B cell (primary cell): ENCODE measurements at regions of chr10 and their contacts with region 1.

Region 1: DNA sequence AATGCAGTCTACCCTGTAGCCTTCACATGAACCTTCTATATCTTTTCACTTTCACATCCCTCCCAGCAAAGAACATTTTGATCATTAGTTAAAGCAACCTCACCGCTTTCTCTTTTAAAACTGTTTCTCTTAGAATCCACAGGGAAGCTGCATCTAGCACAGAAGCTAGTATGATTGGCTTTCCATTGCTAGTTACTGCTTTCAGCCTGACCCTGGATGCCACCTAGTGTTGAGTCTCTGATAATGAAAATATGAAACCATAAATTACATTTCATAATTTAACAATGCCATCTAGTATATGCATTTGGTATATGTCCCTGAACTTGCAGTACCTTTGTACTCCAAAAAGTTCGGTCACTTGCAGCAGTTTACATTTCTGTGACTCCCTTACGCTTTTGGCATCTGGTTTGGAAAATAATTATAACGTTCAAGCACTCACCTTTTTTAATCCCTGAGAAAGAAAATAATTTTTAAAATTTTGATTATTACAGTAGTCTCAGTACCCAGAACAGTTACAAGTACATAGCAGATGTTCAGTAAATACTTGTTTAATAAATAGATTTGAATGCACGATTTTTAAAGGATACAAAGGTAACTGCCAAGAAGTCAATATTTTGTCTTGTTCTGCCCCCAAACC is 22.7 kb downstream of the CISD1 start:
- DNase-seq: peak; percentile 64
- ATAC-seq: peak; percentile 68
- H3K4me3 ChIP-seq: no peak overlapping the region
- H3K4me3 Mint-ChIP-seq: no peak overlapping the region
- H3K27ac ChIP-seq: no peak overlapping the region
- H3K27ac Mint-ChIP-seq: no peak overlapping the region
- H3K4me1 ChIP-seq: no peaks in the 10 kb centered on the region
- H3K4me1 Mint-ChIP-seq: no peaks in the 10 kb centered on the region
- H3K27me3 ChIP-seq: no peaks in the 10 kb centered on the region
- H3K27me3 Mint-ChIP-seq: no peaks in the 10 kb centered on the region
- CTCF ChIP-seq: peak; percentile 88

Region 2: GRCh38 chr10:58152673-58153263 is 138.9 kb before region 1 on chr10:
- CTCF ChIA-PET with region 1: interaction called, 18 read pairs
- POLR2A ChIA-PET with region 1: no interaction called
- intact Hi-C with region 1: no loop called
- DNase-seq: peak; percentile 22
- ATAC-seq: no peak
- H3K4me3 ChIP-seq: no peak overlapping the region
- H3K4me3 Mint-ChIP-seq: no peak overlapping the region
- H3K27ac ChIP-seq: no peak overlapping the region
- H3K27ac Mint-ChIP-seq: no peak overlapping the region
- H3K4me1 ChIP-seq: no peaks in the 10 kb centered on the region
- H3K4me1 Mint-ChIP-seq: no peaks in the 10 kb centered on the region
- H3K27me3 ChIP-seq: peaks cover 0 to 3% (median 0%) of the 10 kb centered on the region in 4 experiments
- H3K27me3 Mint-ChIP-seq: peaks cover 23% of the 10 kb centered on the region
- CTCF ChIP-seq: peak; percentile 55

Region 3: GRCh38 chr10:58184120-58184670 is 107.5 kb before region 1 on chr10:
- CTCF ChIA-PET with region 1: interaction called, 407 read pairs
- POLR2A ChIA-PET with region 1: no interaction called
- intact Hi-C with region 1: no loop called
- DNase-seq: no peak
- ATAC-seq: no peak
- H3K4me3 ChIP-seq: no peak overlapping the region
- H3K4me3 Mint-ChIP-seq: no peak overlapping the region
- H3K27ac ChIP-seq: no peak overlapping the region
- H3K27ac Mint-ChIP-seq: no peak overlapping the region
- H3K4me1 ChIP-seq: no peaks in the 10 kb centered on the region
- H3K4me1 Mint-ChIP-seq: no peaks in the 10 kb centered on the region
- H3K27me3 ChIP-seq: no peaks in the 10 kb centered on the region
- H3K27me3 Mint-ChIP-seq: peaks cover 4% of the 10 kb centered on the region
- CTCF ChIP-seq: no peak

Region 4: GRCh38 chr10:58275908-58276307 is 15.7 kb before region 1 on chr10:
- CTCF ChIA-PET with region 1: interaction called, 14 read pairs
- POLR2A ChIA-PET with region 1: no interaction called
- intact Hi-C with region 1: no loop called
- DNase-seq: no peak
- ATAC-seq: no peak
- H3K4me3 ChIP-seq: no peak overlapping the region
- H3K4me3 Mint-ChIP-seq: no peak overlapping the region
- H3K27ac ChIP-seq: no peak overlapping the region
- H3K27ac Mint-ChIP-seq: no peak overlapping the region
- H3K4me1 ChIP-seq: no peaks in the 10 kb centered on the region
- H3K4me1 Mint-ChIP-seq: peaks cover 4% of the 10 kb centered on the region
- H3K27me3 ChIP-seq: no peaks in the 10 kb centered on the region
- H3K27me3 Mint-ChIP-seq: no peaks in the 10 kb centered on the region
- CTCF ChIP-seq: no peak

Region 5: GRCh38 chr10:58384999-58385783 is 93.5 kb after region 1 on chr10 and contains the start of gene TFAM:
- CTCF ChIA-PET with region 1: interaction called, 12 read pairs
- POLR2A ChIA-PET with region 1: no interaction called
- intact Hi-C with region 1: loop called (anchors 2 kb)
- DNase-seq: peak; percentile 97
- ATAC-seq: peak; percentile 84
- H3K4me3 ChIP-seq: peak within 1 kb of the TSS; percentile 73 to 89 (median 82)
- H3K4me3 Mint-ChIP-seq: peak within 1 kb of the TSS; percentile 92
- H3K27ac ChIP-seq: peak within 1 kb of the TSS; percentile 84 to 97
- H3K27ac Mint-ChIP-seq: peak within 1 kb of the TSS; percentile 96
- H3K4me1 ChIP-seq: peaks cover 24 to 29% of the 10 kb centered on the region in 2 donors
- H3K4me1 Mint-ChIP-seq: peaks cover 43% of the 10 kb centered on the region
- H3K27me3 ChIP-seq: no peaks in the 10 kb centered on the region
- H3K27me3 Mint-ChIP-seq: no peaks in the 10 kb centered on the region
- CTCF ChIP-seq: peak; percentile 47
- total RNA-seq, gene TFAM: 38.4 and 40.6 TPM in 2 replicates

Region 6: GRCh38 chr10:58408011-58408410 is 116.4 kb after region 1 on chr10:
- CTCF ChIA-PET with region 1: no interaction called
- POLR2A ChIA-PET with region 1: no interaction called
- intact Hi-C with region 1: no loop called
- DNase-seq: no peak
- ATAC-seq: no peak
- H3K4me3 ChIP-seq: no peak overlapping the region
- H3K4me3 Mint-ChIP-seq: no peak overlapping the region
- H3K27ac ChIP-seq: no peak overlapping the region
- H3K27ac Mint-ChIP-seq: no peak overlapping the region
- H3K4me1 ChIP-seq: no peaks in the 10 kb centered on the region
- H3K4me1 Mint-ChIP-seq: no peaks in the 10 kb centered on the region
- H3K27me3 ChIP-seq: no peaks in the 10 kb centered on the region
- H3K27me3 Mint-ChIP-seq: no peaks in the 10 kb centered on the region
- CTCF ChIP-seq: no peak